ENCODE measurements at regions of chr1 and their contacts with region 1.

Region 1: DNA sequence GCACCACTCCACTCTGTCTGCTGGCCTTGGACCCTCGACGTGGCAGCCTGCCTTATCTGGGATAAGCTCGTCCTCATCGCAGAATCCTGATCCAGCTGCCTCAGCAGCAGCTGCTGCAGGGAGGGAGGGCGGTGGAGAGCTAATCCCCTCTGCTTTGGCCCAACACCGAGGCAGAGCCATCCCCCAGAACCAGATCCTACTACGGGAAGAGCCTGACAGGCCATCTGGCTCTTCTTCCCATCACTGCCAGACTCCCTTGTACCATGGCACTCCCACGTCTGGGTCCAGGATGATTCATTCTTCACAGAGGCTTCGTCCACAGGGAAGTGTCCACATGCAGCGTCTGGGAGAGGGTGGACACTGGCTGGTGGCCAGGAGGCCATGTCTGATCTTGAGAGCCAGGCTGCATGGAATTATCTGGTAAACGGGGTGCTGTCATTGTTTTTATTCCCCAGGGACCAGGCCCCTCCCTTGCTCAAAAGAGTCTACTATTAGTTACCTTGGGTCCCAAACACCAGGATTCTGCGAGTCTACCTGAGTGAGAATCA is 14.6 kb upstream of the PKP1 start:
- DNase-seq: peak; percentile 89
- ATAC-seq: peak; percentile 34
- H3K4me3 ChIP-seq: no peak overlapping the region
- H3K27ac ChIP-seq: peak overlapping the region; percentile 83
- H3K4me1 ChIP-seq: peaks cover 44% of the 10 kb centered on the region
- H3K27me3 ChIP-seq: no peaks in the 10 kb centered on the region
- CTCF ChIP-seq: no peak

Region 2: GRCh38 chr1:200890818-200891773 is 377.6 kb before region 1 on chr1:
- CTCF ChIA-PET with region 1: no interaction called
- POLR2A ChIA-PET with region 1: no interaction called
- intact Hi-C with region 1: no loop called
- DNase-seq: peak; percentile 95
- ATAC-seq: peak; percentile 51
- H3K4me3 ChIP-seq: peak overlapping the region; percentile 67
- H3K27ac ChIP-seq: peak overlapping the region; percentile 74
- H3K4me1 ChIP-seq: peaks cover 59% of the 10 kb centered on the region
- H3K27me3 ChIP-seq: no peaks in the 10 kb centered on the region
- CTCF ChIP-seq: peak; percentile 100

Region 3: GRCh38 chr1:201053158-201053860 is 215.4 kb before region 1 on chr1:
- CTCF ChIA-PET with region 1: no interaction called
- POLR2A ChIA-PET with region 1: no interaction called
- intact Hi-C with region 1: no loop called
- DNase-seq: peak; percentile 44
- ATAC-seq: peak; percentile 8; the same call in 1 of the 2 replicates
- H3K4me3 ChIP-seq: no peak overlapping the region
- H3K27ac ChIP-seq: no peak overlapping the region
- H3K4me1 ChIP-seq: no peaks in the 10 kb centered on the region
- H3K27me3 ChIP-seq: peaks cover 94% of the 10 kb centered on the region
- CTCF ChIP-seq: peak; percentile 59

Region 4: GRCh38 chr1:201126832-201127754 is 141.6 kb before region 1 on chr1 and contains the start of gene ASCL5:
- CTCF ChIA-PET with region 1: no interaction called
- POLR2A ChIA-PET with region 1: no interaction called
- intact Hi-C with region 1: no loop called
- DNase-seq: peak; percentile 100
- ATAC-seq: peak; percentile 90
- H3K4me3 ChIP-seq: peak within 1 kb of the TSS; percentile 59
- H3K27ac ChIP-seq: peak within 1 kb of the TSS; percentile 35
- H3K4me1 ChIP-seq: peaks cover 38% of the 10 kb centered on the region
- H3K27me3 ChIP-seq: no peaks in the 10 kb centered on the region
- CTCF ChIP-seq: peak; percentile 89
- total RNA-seq, gene ASCL5: 2.4 and 3.1 TPM in 2 replicates

Region 5: GRCh38 chr1:201282931-201283829 is 14.5 kb after region 1 on chr1 and contains the start of gene PKP1:
- CTCF ChIA-PET with region 1: interaction called, 3 read pairs
- POLR2A ChIA-PET with region 1: interaction called, 19 read pairs
- intact Hi-C with region 1: loop called (anchors 1 kb)
- DNase-seq: peak; percentile 100
- ATAC-seq: peak; percentile 84
- H3K4me3 ChIP-seq: peak within 1 kb of the TSS; percentile 79
- H3K27ac ChIP-seq: peak within 1 kb of the TSS; percentile 74
- H3K4me1 ChIP-seq: peaks cover 60% of the 10 kb centered on the region
- H3K27me3 ChIP-seq: no peaks in the 10 kb centered on the region
- CTCF ChIP-seq: 0 out of 2 replicates have a peak, but pooled peaks have one; percentile 27
- total RNA-seq, gene PKP1: 211 and 259 TPM in 2 replicates

Region 6: DNA sequence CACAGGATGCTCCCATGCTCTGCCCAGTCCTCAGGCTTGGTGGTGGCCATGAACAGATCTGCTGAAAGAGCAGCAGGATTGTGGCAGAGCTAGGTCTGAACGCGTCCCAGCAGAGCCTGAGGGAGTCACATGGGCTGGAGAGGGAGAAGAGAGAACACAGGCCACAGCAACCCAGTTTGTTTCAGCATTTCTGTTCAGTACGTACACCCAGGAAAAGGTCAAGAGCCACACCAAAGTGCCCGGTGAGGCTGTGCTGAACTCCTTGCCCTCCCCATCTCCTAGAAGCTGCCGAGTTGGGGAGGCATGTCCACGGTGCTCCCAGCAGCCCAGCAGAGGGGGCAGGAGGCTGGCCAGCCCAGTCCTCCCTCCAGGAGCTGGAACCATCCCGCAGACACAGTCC is 20.1 kb after region 1 on chr1:
- CTCF ChIA-PET with region 1: interaction called, 10 read pairs
- POLR2A ChIA-PET with region 1: interaction called, 19 read pairs
- intact Hi-C with region 1: loop called (anchors 1 kb)
- DNase-seq: no peak
- ATAC-seq: no peak
- H3K4me3 ChIP-seq: peak overlapping the region; percentile 0; the same call in 1 of the 2 replicates
- H3K27ac ChIP-seq: peak overlapping the region; percentile 33
- H3K4me1 ChIP-seq: peaks cover 61% of the 10 kb centered on the region
- H3K27me3 ChIP-seq: no peaks in the 10 kb centered on the region
- CTCF ChIP-seq: peak; percentile 47; the same call in 1 of the 2 replicates

Region 7: DNA sequence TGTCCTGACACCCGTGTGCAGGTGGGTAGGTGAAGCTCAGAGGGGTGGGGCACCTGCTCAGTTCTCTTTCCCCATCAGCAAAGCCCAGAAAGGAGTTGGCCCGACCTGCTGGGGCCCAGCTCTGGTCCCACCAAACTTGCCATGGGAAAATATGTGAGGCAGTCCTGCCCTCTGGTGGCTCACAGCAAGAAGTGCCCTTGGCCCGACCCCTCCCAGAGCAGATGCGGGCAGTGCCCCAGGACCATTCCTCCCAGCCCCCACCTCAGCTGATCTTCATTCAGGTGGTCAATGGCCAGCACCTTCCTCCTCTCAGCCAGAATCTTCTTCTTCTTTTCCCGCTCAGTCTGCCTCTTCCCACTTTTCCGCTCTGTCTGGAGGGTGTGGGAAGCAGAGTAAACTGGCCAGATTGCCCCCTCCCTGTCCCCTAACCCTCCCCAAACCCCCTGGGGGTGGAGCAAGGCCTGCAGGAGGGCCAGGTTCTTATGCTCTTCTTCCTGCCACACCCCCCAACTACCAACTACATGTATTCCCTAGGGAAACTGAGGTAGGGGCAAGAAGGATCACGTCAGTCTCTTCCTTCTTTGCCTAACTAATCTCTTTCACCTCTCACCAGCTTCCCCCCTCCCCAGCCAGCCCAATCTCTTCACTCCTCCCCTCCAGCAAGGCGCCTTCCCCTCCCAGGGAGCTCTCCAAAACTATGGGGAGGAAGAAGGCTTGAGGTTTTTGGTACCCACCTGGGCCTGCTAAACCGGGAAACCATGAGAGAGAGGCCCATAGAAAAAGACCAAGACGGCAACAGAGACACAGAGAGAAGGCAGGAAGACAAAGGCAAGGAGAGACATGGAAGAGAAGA is 93.2 kb after region 1 on chr1:
- CTCF ChIA-PET with region 1: interaction called, 3 read pairs
- POLR2A ChIA-PET with region 1: no interaction called
- intact Hi-C with region 1: loop called (anchors 1 kb)
- DNase-seq: peak; percentile 93
- ATAC-seq: peak; percentile 83
- H3K4me3 ChIP-seq: no peak overlapping the region
- H3K27ac ChIP-seq: no peak overlapping the region
- H3K4me1 ChIP-seq: no peaks in the 10 kb centered on the region
- H3K27me3 ChIP-seq: peaks cover 8% of the 10 kb centered on the region
- CTCF ChIP-seq: peak; percentile 100